ENCODE measurements at regions of chr5 and their contacts with region 1.

Region 1: DNA sequence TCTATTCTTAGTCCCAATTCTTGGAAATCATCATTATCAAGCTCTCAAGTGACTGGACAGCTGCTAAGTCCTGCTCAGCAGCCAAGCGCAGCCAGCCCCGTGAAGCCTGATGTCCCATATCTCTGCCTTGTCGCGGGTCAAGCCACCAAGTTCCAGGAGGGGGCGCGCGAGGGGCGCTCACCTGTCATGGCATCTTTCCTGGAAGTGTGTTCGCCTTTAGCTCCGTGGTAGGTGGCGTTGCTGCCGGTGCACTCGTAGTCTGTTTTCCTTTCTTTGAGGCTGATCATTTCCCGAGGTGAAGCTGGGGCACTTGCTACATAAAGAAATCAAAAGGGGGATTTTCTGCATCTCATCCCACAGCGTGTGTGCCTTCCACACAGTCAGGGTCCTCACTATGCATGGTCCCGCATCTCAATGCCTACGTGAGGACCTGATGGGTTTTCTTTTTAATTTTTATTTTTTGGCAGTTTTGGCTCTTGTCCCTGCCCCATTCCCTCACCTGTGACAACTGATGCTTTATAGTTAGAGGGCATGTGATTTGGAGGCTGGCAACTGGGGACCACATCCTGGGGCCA is 227.0 kb upstream of the DAP start:
- DNase-seq: peak; percentile 73
- CTCF ChIP-seq: peak; percentile 90

Region 2: DNA sequence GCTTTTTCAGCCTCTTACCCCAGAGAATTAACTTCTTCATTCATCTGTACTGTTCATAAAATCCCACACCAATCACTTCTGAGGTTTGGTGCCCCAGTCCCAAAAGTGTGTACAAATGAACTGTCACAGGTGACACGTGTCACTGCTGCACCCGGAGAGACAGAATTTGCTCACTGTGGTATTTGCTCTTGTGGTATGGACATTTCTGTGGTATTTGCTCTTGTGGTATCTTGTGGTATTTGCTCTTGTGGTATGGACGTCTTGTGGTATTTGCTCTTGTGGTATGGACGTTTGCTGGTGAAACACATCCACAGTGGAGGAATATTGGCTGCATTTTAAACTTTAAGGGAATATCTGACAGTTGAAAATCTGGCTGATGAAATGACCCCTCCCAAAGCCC is 12.1 kb before region 1 on chr5:
- CTCF ChIA-PET with region 1: interaction called, 18 read pairs
- POLR2A ChIA-PET with region 1: no interaction called
- DNase-seq: no peak
- CTCF ChIP-seq: no peak

Region 3: GRCh38 chr5:11000515-11001353 is 12.7 kb after region 1 on chr5:
- CTCF ChIA-PET with region 1: interaction called, 60 read pairs
- POLR2A ChIA-PET with region 1: no interaction called
- DNase-seq: no peak
- CTCF ChIP-seq: no peak

Region 4: DNA sequence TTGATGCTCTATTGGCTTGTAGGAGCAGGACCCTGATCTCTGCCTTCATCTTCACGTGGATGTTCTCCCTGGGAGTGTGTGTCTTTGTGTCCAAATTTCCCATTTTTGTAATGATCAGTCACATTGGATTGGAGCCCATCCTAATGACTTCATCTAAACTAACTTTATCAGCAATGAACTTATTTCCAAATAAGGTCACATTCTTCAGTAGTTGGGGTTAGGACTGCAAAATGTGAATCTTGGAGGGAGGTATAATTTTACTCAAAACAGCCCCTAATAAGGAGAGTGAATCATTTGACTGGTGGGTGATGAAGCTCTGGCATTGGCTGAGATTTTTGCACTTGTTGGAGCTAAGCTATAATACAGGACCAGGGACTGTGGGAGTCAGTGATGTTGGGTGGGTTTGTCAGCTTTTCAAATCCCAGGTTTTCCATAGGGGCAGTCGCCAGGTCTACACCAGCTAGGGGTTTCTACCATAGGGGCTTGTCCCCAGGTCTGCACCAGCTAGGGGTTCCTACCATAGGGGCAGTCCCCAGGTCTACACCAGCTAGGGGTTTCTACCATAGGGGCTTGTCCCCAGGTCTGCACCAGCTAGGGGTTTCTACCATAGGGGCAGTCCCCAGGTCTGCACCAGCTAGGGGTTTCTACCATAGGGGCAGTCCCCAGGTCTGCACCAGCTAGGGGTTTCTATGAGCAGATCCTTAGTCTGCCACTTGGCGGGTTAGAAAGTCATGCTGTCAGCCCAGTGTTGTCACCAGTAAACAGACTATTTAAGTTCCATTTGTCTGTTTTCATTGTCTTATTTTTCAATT is 155.6 kb after region 1 on chr5:
- CTCF ChIA-PET with region 1: no interaction called
- POLR2A ChIA-PET with region 1: no interaction called
- DNase-seq: no peak
- CTCF ChIP-seq: no peak

Region 5: GRCh38 chr5:11261226-11261625 is 273.2 kb after region 1 on chr5:
- CTCF ChIA-PET with region 1: no interaction called
- POLR2A ChIA-PET with region 1: no interaction called
- DNase-seq: no peak
- CTCF ChIP-seq: no peak